ENCODE measurements at regions of chr4 and their contacts with region 1.

Region 1: GRCh38 chr4:72326692-72327632 is 242.1 kb downstream of the ADAMTS3 start:
- DNase-seq: no peak
- ATAC-seq: no peak
- H3K4me3 ChIP-seq: no peak overlapping the region
- H3K27ac ChIP-seq: no peak overlapping the region
- H3K4me1 ChIP-seq: no peaks in the 10 kb centered on the region
- H3K27me3 ChIP-seq: no peaks in the 10 kb centered on the region
- CTCF ChIP-seq: peak in 3 of 5 experiments; percentile 21 to 41 (median 21)
- POLR2A ChIP-seq: no peak

Region 2: DNA sequence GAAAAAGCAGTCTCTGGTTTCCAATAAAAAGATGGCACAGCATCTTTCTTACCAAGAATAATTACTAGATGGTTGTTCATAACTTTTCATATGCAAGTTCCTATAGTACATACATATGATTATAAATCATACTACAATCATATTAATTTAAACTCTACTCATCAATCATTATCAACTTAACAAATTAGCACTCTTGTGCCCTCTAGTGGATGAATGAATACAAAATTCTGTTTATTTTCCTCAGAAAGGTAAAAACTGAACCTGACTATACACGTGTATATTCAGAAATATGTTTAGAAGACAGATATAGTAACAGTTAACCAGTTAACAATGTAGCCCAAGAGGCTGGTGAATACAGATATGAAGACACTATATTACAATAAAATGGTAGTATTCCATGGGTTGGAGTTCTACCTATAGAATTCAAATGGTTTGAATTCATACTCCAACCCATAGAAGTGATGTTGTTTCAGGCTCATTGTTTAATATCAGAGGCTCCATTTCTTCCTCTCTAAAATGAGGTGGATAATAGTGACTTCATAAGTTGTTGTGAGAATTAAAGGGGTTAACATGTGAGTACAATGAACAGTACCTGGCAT is 142.0 kb after region 1 on chr4:
- in situ Hi-C with region 1: no loop called
- intact Hi-C with region 1: loop called (anchors 10 kb)
- DNase-seq: no peak
- ATAC-seq: no peak
- H3K4me3 ChIP-seq: no peak overlapping the region
- H3K27ac ChIP-seq: no peak overlapping the region
- H3K4me1 ChIP-seq: no peaks in the 10 kb centered on the region
- H3K27me3 ChIP-seq: no peaks in the 10 kb centered on the region
- CTCF ChIP-seq: peak in 2 of 5 experiments; percentile 23 to 35
- POLR2A ChIP-seq: no peak